ENCODE measurements at regions of chr7 and their contacts with region 1.

Region 1: GRCh38 chr7:107168233-107169119 is at the start of gene HBP1:
- DNase-seq: peak; percentile 97
- H3K4me3 Mint-ChIP-seq: peak within 1 kb of the TSS; percentile 88
- H3K27ac Mint-ChIP-seq: peak within 1 kb of the TSS; percentile 97
- H3K4me1 Mint-ChIP-seq: peaks cover 26% of the 10 kb centered on the region
- H3K27me3 Mint-ChIP-seq: peaks cover 10% of the 10 kb centered on the region
- total RNA-seq, gene HBP1: 15.2 and 16.6 TPM in 2 replicates

Region 2: GRCh38 chr7:106285051-106285854 is 883.2 kb before region 1 on chr7:
- intact Hi-C with region 1: loop called (anchors 1 kb)
- DNase-seq: peak; percentile 96
- H3K4me3 Mint-ChIP-seq: peak overlapping the region; percentile 95
- H3K27ac Mint-ChIP-seq: peak overlapping the region; percentile 99
- H3K4me1 Mint-ChIP-seq: peaks cover 53% of the 10 kb centered on the region
- H3K27me3 Mint-ChIP-seq: peaks cover 2% of the 10 kb centered on the region

Region 3: DNA sequence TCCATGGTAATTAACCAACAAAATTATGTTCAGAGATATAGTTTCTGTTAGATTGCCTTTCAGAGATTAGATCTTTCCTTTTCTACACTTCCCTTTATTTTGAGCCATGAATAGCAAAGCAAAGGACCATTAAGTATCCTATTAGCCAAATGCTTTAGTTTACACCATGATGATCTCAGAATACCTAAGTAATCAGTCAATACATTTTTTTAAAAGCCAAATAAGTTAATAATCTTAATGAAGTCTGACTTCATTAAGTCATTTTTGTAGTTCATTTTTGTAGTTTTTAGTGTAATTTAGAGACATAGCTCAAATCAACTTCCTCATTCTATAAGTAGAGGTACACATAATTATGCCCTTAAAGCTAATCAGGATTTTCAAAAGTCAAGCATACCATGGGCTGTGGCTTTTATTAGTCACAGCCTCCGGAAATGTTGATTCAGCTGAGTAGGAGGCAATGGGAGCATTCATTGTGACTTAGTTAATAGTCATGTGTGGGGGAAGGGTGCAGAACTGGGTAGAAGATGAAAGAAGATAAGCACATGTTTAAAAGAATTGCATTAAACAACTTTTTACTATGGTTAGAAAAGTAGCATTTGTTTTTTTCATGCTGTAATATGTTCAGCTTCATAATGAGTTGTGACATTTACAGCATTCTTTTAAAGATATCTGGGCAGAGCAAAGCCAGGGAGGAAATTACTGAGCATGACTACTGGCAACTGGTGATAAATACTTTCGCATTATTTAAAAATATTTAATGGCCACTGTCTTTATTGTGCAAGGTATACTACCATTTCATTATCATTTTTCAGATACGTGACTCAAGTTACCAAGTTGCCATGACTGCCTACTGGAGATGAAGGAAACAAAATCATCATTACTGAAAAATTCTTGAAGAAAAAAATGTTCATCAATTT is 450.3 kb before region 1 on chr7:
- intact Hi-C with region 1: loop called (anchors 1 kb)
- DNase-seq: peak; percentile 37
- H3K4me3 Mint-ChIP-seq: no peak overlapping the region
- H3K27ac Mint-ChIP-seq: no peak overlapping the region
- H3K4me1 Mint-ChIP-seq: peaks cover 11% of the 10 kb centered on the region
- H3K27me3 Mint-ChIP-seq: no peaks in the 10 kb centered on the region

Region 4: DNA sequence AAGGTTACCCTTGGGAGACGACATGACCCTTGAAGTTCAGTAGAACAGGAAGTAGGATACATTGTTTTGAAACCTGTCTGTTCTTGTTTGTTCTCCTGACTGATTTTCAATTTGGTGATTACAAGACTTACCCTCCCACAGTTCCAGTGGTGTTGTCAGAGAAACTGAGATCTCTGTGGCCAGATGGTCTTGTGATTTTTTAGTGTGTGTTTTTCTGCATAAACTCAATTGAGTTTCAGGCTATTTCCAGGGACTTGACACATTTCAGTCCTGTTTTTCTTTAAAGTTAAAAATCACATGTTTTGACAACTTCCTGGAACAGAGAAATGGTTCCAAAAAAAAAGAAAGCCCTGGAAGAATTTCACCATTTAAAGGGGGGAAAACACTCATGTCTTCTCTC is 281.1 kb before region 1 on chr7:
- intact Hi-C with region 1: loop called (anchors 5 kb)
- DNase-seq: no peak
- H3K4me3 Mint-ChIP-seq: no peak overlapping the region
- H3K27ac Mint-ChIP-seq: peak overlapping the region; percentile 83
- H3K4me1 Mint-ChIP-seq: peaks cover 41% of the 10 kb centered on the region
- H3K27me3 Mint-ChIP-seq: no peaks in the 10 kb centered on the region

Region 5: GRCh38 chr7:107180378-107180777 is 11.9 kb after region 1 on chr7:
- intact Hi-C with region 1: loop called (anchors 1 kb)
- DNase-seq: no peak
- H3K4me3 Mint-ChIP-seq: no peak overlapping the region
- H3K27ac Mint-ChIP-seq: peak overlapping the region; percentile 59
- H3K4me1 Mint-ChIP-seq: peaks cover 19% of the 10 kb centered on the region
- H3K27me3 Mint-ChIP-seq: no peaks in the 10 kb centered on the region

Region 6: DNA sequence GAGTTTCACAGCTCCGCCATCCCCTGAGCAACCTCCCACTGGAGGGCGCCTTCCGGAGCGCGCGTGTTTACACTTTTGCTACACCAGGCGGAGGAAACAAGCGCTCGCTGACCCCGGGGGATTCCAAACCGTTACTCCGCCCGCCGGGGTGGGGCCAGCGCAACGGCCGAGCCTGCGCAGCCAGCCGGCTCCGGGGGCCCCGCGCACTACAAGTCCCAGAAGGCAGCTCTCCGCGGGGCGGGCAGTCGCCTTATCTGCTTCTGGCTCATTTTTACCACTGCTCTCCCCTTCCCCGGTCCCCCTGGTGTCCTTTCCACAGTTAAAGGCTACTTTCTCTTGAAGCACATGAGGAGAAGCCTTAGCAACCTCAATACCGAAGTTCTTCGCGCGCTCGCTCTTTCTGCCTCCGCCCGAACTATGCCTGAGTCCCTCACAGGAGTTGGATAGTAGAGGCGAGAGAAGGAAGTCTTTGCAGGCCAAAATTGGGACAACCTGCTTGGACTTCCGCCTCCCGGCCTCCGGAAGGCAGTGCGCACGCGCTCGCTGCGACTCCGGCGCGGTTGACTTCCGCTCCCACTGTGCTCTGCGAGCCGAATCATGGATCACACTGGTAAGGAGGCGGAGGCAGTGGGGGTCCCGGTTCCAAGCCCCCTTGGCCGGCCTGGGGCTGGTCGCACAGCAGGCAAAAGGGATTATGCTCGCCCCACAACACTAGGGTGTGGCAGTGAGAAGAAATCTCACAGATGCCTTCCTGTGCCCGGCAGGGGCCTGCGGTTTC is 575.3 kb after region 1 on chr7 and contains the start of gene CBLL1:
- intact Hi-C with region 1: loop called (anchors 1 kb)
- DNase-seq: peak; percentile 99
- H3K4me3 Mint-ChIP-seq: peak within 1 kb of the TSS; percentile 93
- H3K27ac Mint-ChIP-seq: peak within 1 kb of the TSS; percentile 100
- H3K4me1 Mint-ChIP-seq: peaks cover 46% of the 10 kb centered on the region
- H3K27me3 Mint-ChIP-seq: peaks cover 3% of the 10 kb centered on the region
- total RNA-seq, gene CBLL1: 46.9 and 49.6 TPM in 2 replicates

Region 7: GRCh38 chr7:108525985-108526767 is 1357.7 kb after region 1 on chr7 and contains the start of gene PNPLA8:
- intact Hi-C with region 1: loop called (anchors 1 kb)
- DNase-seq: peak; percentile 100
- H3K4me3 Mint-ChIP-seq: peak within 1 kb of the TSS; percentile 92
- H3K27ac Mint-ChIP-seq: peak within 1 kb of the TSS; percentile 97
- H3K4me1 Mint-ChIP-seq: peaks cover 34% of the 10 kb centered on the region
- H3K27me3 Mint-ChIP-seq: peaks cover 3% of the 10 kb centered on the region
- total RNA-seq, gene PNPLA8: 16.8 and 18.3 TPM in 2 replicates